Activated CD4-positive, alpha-beta memory T cell treated with anti-CD3 and anti-CD28 coated beads, Interleukin-2, amount 10 ng/mL, durations not matched to agents 7 days and 5 days (primary cell): ENCODE measurements at regions of chr12 and their contacts with region 1.

Region 1: DNA sequence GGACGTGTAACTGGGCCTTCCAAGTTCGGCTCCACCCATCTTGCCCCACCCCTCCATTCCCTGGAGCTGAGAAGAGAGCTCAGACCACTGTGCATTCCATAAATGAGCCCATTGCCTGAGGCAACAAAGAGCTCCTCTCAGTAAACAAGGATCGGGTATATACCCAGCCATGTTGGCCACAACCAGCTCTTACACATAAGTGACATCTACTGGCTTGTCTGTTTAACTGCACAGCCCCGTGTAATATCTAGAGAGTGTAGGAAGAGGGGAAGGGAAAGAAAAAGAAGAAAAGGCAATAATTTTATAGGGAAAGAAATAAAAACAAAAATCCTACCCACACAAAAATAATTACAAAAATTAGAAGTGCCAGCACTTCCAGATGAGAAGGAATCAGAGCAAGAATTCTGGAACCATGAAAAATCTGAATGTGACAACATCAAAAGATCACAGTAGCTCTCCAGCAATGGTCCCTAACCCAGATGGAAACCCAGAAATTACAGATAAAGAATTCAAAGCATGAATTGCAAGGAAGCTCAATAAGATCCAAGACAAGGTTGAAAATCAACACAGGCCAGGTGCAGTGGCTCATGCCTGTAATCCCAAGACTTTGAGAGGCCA is 308.1 kb downstream of the RPAP3 start:
- DNase-seq: peak; percentile 59
- H3K4me3 Mint-ChIP-seq: no peak overlapping the region
- H3K27ac Mint-ChIP-seq: peak overlapping the region; percentile 77
- H3K4me1 Mint-ChIP-seq: peaks cover 69% of the 10 kb centered on the region
- H3K27me3 Mint-ChIP-seq: no peaks in the 10 kb centered on the region

Region 2: DNA sequence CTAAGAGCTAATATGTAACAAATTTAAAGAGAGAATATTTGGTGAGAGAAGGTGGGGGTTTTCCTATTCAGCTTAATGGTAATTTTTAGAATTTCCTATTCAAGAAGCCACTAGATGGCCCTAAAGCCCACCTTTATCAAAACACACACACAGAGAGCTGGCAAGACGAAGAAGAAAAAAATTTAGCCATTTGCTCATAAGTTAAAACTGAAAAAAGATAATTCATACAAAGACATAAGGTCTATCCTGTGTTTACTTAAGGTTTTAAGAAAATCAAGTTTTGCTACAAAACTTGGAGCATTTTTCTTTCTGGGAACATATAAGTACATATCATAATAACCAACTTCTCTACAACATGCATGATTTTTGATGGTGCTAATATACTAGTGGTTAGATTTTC is 365.1 kb before region 1 on chr12:
- CTCF ChIA-PET with region 1: interaction called, 73 read pairs
- POLR2A ChIA-PET with region 1: no interaction called
- DNase-seq: no peak
- H3K4me3 Mint-ChIP-seq: no peak overlapping the region
- H3K27ac Mint-ChIP-seq: no peak overlapping the region
- H3K4me1 Mint-ChIP-seq: peaks cover 9% of the 10 kb centered on the region
- H3K27me3 Mint-ChIP-seq: peaks cover 5% of the 10 kb centered on the region

Region 3: GRCh38 chr12:47079468-47079980 is 318.2 kb before region 1 on chr12 and contains the starts of genes AMIGO2 and PCED1B:
- CTCF ChIA-PET with region 1: interaction called, 34 read pairs
- POLR2A ChIA-PET with region 1: interaction called, 17 read pairs
- DNase-seq: peak; percentile 68
- H3K4me3 Mint-ChIP-seq: peak within 1 kb of the TSS; percentile 92
- H3K27ac Mint-ChIP-seq: peak within 1 kb of the TSS; percentile 79
- H3K4me1 Mint-ChIP-seq: peaks cover 67% of the 10 kb centered on the region
- H3K27me3 Mint-ChIP-seq: no peaks in the 10 kb centered on the region
- total RNA-seq, gene AMIGO2: 6.6 to 7.1 TPM
- total RNA-seq, gene PCED1B: 57.1 to 62.2 TPM

Region 4: GRCh38 chr12:47207340-47207717 is 190.4 kb before region 1 on chr12:
- CTCF ChIA-PET with region 1: interaction called, 25 read pairs
- POLR2A ChIA-PET with region 1: interaction called, 159 read pairs
- DNase-seq: peak; percentile 71
- H3K4me3 Mint-ChIP-seq: peak overlapping the region; percentile 60
- H3K27ac Mint-ChIP-seq: peak overlapping the region; percentile 89
- H3K4me1 Mint-ChIP-seq: peaks cover 70% of the 10 kb centered on the region
- H3K27me3 Mint-ChIP-seq: no peaks in the 10 kb centered on the region

Region 5: DNA sequence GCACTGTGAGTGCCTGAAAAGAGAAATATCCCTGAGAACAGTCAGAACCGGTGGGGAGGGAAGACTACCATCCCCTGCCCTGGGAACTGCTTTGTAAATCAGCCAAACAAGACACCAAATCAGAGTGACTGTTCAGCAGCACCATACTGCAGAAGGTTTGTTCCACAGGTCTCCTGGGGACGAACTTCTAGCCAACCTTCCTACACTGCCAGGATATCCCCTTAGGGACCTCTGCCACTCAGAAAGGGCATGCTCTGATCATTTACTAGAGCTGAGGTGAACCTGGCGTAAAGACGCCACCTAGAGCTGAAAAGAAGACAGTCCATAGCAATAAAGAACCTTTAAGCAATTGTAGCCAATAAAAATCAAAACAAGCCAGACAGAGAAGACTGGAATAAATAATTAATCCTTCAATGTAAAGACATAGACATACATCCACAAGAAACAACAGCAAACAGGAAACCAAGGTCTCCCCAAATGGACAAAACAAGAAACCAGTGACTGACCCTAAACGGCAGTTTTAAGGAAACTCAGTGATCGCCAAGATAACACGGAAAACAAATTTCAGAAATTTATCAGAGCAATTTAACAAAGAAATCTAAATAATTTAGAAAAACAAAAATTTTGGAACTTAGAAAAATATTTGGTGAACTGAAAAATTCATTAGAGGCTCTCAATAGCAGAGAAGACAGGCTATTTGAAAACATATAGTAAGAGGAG is 89.9 kb before region 1 on chr12:
- CTCF ChIA-PET with region 1: interaction called, 23 read pairs
- POLR2A ChIA-PET with region 1: interaction called, 21 read pairs
- DNase-seq: peak; percentile 64
- H3K4me3 Mint-ChIP-seq: peak overlapping the region; percentile 76
- H3K27ac Mint-ChIP-seq: peak overlapping the region; percentile 87
- H3K4me1 Mint-ChIP-seq: peaks cover 38% of the 10 kb centered on the region
- H3K27me3 Mint-ChIP-seq: no peaks in the 10 kb centered on the region

Region 6: GRCh38 chr12:47361389-47362021 is 36.3 kb before region 1 on chr12:
- CTCF ChIA-PET with region 1: interaction called, 16 read pairs
- POLR2A ChIA-PET with region 1: interaction called, 23 read pairs
- DNase-seq: peak; percentile 68
- H3K4me3 Mint-ChIP-seq: peak overlapping the region; percentile 76
- H3K27ac Mint-ChIP-seq: peak overlapping the region; percentile 100
- H3K4me1 Mint-ChIP-seq: peaks cover 60% of the 10 kb centered on the region
- H3K27me3 Mint-ChIP-seq: no peaks in the 10 kb centered on the region